Pancreas (tissue), 10 donors: ENCODE measurements at regions of chr7 and their contacts with region 1.

Region 1: GRCh38 chr7:101140339-101140699 is 13.4 kb downstream of the SERPINE1 start:
- DNase-seq: no peak
- ATAC-seq: no peak
- H3K4me3 ChIP-seq: no peak overlapping the region
- H3K27ac ChIP-seq: no peak overlapping the region
- H3K4me1 ChIP-seq: peaks cover 0 to 4% (median 0%) of the 10 kb centered on the region in 3 donors
- H3K27me3 ChIP-seq: peaks cover 0 to 6% (median 0%) of the 10 kb centered on the region in 4 donors
- CTCF ChIP-seq: no peak

Region 2: GRCh38 chr7:100673300-100673941 is 466.9 kb before region 1 on chr7 and contains the start of gene GNB2:
- intact Hi-C with region 1: no loop called
- DNase-seq: peak; percentile 99 to 100 (median 99)
- ATAC-seq: peak; percentile 85 to 90 (median 86)
- H3K4me3 ChIP-seq: peak within 1 kb of the TSS; percentile 87 to 91 (median 90)
- H3K27ac ChIP-seq: peak within 1 kb of the TSS; percentile 93 to 98 (median 97)
- H3K4me1 ChIP-seq: no peaks in the 10 kb centered on the region
- H3K27me3 ChIP-seq: no peaks in the 10 kb centered on the region
- CTCF ChIP-seq: no peak
- total RNA-seq, gene GNB2: 84.7 to 118 (median 104) TPM

Region 3: GRCh38 chr7:101197991-101198390 is 57.7 kb after region 1 on chr7:
- intact Hi-C with region 1: loop called in 2 of 3 experiments (anchors 10 kb)
- DNase-seq: no peak
- ATAC-seq: no peak
- H3K4me3 ChIP-seq: no peak overlapping the region
- H3K27ac ChIP-seq: no peak overlapping the region
- H3K4me1 ChIP-seq: peaks cover 0 to 3% (median 0%) of the 10 kb centered on the region in 3 donors
- H3K27me3 ChIP-seq: peaks cover 0 to 2% (median 0%) of the 10 kb centered on the region in 4 donors
- CTCF ChIP-seq: no peak

Region 4: DNA sequence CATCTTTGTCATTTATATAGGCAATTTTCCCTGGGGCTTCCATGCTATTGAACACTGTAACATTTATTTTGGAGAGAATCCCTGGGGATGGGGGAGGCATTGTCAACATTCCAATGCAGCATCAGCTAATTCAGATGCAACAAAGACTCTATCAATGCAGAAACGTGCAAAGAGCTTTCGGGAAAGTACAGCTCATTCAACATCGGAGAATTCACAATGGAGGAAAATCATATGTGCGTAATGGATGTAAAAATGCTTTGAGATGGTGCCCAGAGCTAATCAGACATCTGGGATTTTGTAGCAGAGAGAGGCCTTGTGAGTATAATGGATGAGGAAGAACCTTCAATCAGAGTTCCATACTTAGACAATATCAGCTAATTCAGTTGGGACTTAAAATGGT is 132.9 kb after region 1 on chr7:
- intact Hi-C with region 1: loop called in 2 of 3 experiments (anchors 5 to 10 kb)
- DNase-seq: no peak
- ATAC-seq: no peak
- H3K4me3 ChIP-seq: no peak overlapping the region
- H3K27ac ChIP-seq: no peak overlapping the region
- H3K4me1 ChIP-seq: no peaks in the 10 kb centered on the region
- H3K27me3 ChIP-seq: no peaks in the 10 kb centered on the region
- CTCF ChIP-seq: no peak